CD8-positive, alpha-beta T cell (primary cell): ENCODE measurements at regions of chr4 and their contacts with region 1.

Region 1: DNA sequence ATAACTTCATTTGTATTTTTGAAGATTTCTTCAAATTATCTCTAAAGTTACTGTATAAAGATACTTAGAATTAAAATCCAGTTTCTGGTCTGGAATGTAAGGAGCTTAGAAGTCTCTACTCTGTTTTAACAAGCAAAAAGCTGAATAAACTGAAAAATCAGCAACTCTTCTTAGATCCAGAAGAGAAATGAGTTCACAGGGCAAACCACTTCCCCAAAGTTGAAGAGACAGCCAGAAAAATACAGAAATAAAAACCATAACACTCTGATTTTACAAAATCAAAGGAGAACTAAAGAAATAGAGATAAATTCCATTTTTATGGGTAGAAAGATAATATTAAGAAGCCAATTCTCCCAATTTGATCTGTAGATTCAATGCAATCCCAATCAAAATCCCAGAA is 1166.8 kb downstream of the ADGRL3 start:
- DNase-seq: no peak
- ATAC-seq: no peak
- H3K4me3 ChIP-seq: no peak overlapping the region
- H3K4me3 Mint-ChIP-seq: no peak overlapping the region
- H3K27ac ChIP-seq: no peak overlapping the region
- H3K27ac Mint-ChIP-seq: no peak overlapping the region
- H3K4me1 ChIP-seq: no peaks in the 10 kb centered on the region
- H3K4me1 Mint-ChIP-seq: no peaks in the 10 kb centered on the region
- H3K27me3 ChIP-seq: no peaks in the 10 kb centered on the region
- H3K27me3 Mint-ChIP-seq: no peaks in the 10 kb centered on the region
- CTCF ChIP-seq: no peak

Region 2: GRCh38 chr4:62377700-62378099 is 10.8 kb after region 1 on chr4:
- CTCF ChIA-PET with region 1: no interaction called
- POLR2A ChIA-PET with region 1: no interaction called
- intact Hi-C with region 1: loop called in 1 of 2 experiments (anchors 1 kb)
- DNase-seq: no peak
- ATAC-seq: no peak
- H3K4me3 ChIP-seq: no peak overlapping the region
- H3K4me3 Mint-ChIP-seq: no peak overlapping the region
- H3K27ac ChIP-seq: no peak overlapping the region
- H3K27ac Mint-ChIP-seq: no peak overlapping the region
- H3K4me1 ChIP-seq: no peaks in the 10 kb centered on the region
- H3K4me1 Mint-ChIP-seq: no peaks in the 10 kb centered on the region
- H3K27me3 ChIP-seq: no peaks in the 10 kb centered on the region
- H3K27me3 Mint-ChIP-seq: no peaks in the 10 kb centered on the region
- CTCF ChIP-seq: no peak